Endothelial cell of umbilical vein (primary cell): ENCODE measurements at regions of chr17 and their contacts with region 1.

Region 1: DNA sequence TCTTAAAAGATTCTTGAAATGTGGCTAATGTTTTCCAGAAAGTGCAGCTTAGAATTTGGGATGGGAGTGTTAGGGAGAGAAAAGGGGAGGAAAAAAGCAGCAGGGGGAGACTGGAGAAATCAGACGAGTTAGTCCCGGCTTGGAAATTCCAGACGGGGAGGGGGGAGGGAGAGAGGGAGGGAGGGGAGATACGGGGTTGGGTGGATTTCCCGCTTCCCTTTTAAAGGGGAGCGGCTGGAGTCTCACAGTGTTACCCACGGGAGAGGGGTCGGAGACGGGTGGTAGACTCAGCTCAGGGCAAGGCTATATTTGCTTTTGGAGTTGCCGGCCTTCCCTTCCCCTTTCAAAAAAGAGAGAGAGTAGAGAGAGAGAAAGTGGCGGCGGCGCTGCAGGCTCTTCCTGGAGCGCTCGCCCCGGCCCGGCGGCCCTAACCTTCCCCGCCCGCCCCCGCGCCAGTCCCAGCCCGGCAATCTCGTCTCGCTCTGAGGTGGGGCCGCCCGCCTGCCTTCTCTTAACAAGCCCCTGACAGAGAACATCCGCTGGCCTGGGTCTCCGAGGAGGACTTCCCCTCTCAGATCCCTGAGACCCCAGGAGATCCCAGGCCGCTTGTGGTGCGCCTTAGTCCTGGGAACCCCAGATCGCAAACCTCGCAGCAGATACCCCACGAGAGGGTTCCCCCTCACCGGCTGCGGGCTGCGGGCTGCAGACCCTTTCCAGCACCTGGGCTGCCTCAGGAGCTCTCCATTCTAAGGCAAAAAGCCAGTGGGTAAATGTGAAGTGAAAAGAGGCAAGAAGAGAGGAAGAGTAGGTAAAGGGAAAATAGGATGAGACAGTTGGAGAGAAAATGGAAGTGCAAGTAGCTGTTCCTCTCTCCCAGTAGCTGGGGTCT is 6.7 kb downstream of the IGF2BP1 start:
- DNase-seq: peak; percentile 68
- H3K4me3 ChIP-seq: peak overlapping the region; percentile 46 to 76 (median 58)
- H3K27ac ChIP-seq: peak overlapping the region; percentile 13
- H3K4me1 ChIP-seq: peaks cover 44% of the 10 kb centered on the region
- H3K27me3 ChIP-seq: no peaks in the 10 kb centered on the region
- CTCF ChIP-seq: no peak
- POLR2A ChIP-seq: no peak

Region 2: GRCh38 chr17:48954300-48954755 is 49.5 kb before region 1 on chr17:
- CTCF ChIA-PET with region 1: interaction called, 16 read pairs
- POLR2A ChIA-PET with region 1: no interaction called
- dilution Hi-C with region 1: no loop called
- intact Hi-C with region 1: no loop called
- DNase-seq: peak; percentile 69
- H3K4me3 ChIP-seq: no peak overlapping the region
- H3K27ac ChIP-seq: no peak overlapping the region
- H3K4me1 ChIP-seq: no peaks in the 10 kb centered on the region
- H3K27me3 ChIP-seq: peaks cover 0 to 2% of the 10 kb centered on the region in 2 experiments
- CTCF ChIP-seq: peak; percentile 66 to 69
- POLR2A ChIP-seq: no peak

Region 3: DNA sequence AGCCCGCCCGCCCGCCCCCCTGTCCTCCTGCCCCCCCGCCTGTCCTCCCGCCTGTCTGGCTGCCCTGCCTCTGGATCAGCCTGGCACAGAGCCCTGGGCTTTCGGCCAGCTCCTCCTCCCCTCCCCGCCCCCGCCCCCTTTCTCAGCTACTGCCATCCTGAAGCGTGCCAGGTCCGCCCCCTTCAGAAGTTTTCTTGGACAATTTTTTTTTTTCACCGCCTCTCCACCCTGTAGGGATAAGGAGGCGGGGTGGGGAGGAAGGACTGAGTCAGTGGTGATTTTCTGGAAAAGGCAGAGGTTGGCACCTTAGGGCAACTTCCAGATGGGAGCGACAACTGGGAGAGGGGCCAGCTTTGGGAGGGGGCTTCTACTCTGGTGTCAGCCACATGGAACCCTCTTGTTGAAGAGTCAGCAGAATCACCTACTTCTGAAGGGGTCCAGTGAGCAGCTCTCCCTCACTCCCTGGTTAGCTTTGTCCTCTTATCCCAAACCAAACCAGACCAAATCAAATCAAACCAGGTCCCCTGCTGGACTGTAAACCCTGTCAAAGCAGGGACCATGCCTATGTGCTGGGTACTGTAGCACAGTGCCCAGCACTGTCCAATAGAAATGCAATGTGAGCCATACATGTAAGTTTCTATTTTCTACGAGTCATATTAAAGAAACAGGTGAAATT is 13.1 kb after region 1 on chr17:
- CTCF ChIA-PET with region 1: interaction called, 15 read pairs
- POLR2A ChIA-PET with region 1: interaction called, 5 read pairs
- dilution Hi-C with region 1: no loop called
- intact Hi-C with region 1: loop called (anchors 1 kb)
- DNase-seq: peak; percentile 94
- H3K4me3 ChIP-seq: no peak overlapping the region
- H3K27ac ChIP-seq: peak overlapping the region; percentile 45
- H3K4me1 ChIP-seq: peaks cover 52% of the 10 kb centered on the region
- H3K27me3 ChIP-seq: no peaks in the 10 kb centered on the region
- CTCF ChIP-seq: no peak
- POLR2A ChIP-seq: no peak

Region 4: DNA sequence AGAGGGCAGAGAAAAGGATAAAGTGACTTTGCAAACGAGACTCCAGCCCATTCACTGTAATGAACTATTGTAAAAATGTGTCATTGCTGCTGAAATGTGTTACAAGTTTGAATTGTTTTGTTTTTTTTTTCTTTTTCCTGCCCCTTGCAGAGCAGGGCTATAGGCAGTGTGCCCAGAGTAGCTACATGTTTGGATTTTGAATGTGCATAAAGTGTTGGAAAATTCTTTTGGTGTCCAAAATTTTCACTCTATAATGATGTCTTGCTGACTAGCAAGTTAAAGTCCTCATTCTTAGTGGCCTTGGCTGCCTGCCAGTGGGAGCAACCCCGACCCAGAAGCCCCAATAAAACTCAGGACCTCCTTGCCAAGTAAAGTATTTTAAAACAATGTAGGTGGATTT is 59.8 kb after region 1 on chr17:
- CTCF ChIA-PET with region 1: no interaction called
- POLR2A ChIA-PET with region 1: no interaction called
- dilution Hi-C with region 1: no loop called
- intact Hi-C with region 1: no loop called
- DNase-seq: peak; percentile 41
- H3K4me3 ChIP-seq: no peak overlapping the region
- H3K27ac ChIP-seq: no peak overlapping the region
- H3K4me1 ChIP-seq: no peaks in the 10 kb centered on the region
- H3K27me3 ChIP-seq: no peaks in the 10 kb centered on the region
- CTCF ChIP-seq: no peak
- POLR2A ChIP-seq: no peak

Region 5: GRCh38 chr17:49425004-49425286 is 421.1 kb after region 1 on chr17:
- CTCF ChIA-PET with region 1: no interaction called
- POLR2A ChIA-PET with region 1: no interaction called
- dilution Hi-C with region 1: no loop called
- intact Hi-C with region 1: no loop called
- DNase-seq: no peak
- H3K4me3 ChIP-seq: no peak overlapping the region
- H3K27ac ChIP-seq: no peak overlapping the region
- H3K4me1 ChIP-seq: no peaks in the 10 kb centered on the region
- H3K27me3 ChIP-seq: peaks cover 5 to 6% of the 10 kb centered on the region in 2 experiments
- CTCF ChIP-seq: no peak
- POLR2A ChIP-seq: no peak